ENCODE measurements at regions of chr9 and their contacts with region 1.

Region 1: DNA sequence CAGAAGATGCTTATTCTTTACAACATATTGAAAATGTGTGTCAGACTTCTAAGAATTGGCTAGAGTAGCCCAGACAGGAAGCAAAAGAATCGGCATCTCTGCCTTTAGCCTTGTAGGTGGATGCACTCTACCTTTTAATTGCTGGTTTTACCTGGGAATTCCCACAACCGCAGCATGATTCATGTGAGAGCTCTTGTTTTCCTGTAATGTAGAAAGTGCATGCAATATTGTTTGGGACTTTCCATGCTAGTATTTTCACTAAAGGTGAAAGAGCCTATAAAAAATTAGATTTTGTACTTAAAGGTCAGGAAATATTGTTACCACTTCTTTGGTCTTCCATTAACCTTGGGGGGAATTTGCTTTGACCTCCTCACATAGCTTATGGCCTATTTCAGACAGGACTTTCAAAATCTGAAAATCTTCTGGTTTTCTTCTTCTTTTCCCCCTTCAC is 89.8 kb downstream of the NTRK2 start:
- DNase-seq: peak; percentile 49
- H3K4me3 Mint-ChIP-seq: peak overlapping the region; percentile 59
- H3K27ac Mint-ChIP-seq: peak overlapping the region; percentile 83
- H3K4me1 Mint-ChIP-seq: peaks cover 55% of the 10 kb centered on the region
- H3K27me3 Mint-ChIP-seq: no peaks in the 10 kb centered on the region

Region 2: DNA sequence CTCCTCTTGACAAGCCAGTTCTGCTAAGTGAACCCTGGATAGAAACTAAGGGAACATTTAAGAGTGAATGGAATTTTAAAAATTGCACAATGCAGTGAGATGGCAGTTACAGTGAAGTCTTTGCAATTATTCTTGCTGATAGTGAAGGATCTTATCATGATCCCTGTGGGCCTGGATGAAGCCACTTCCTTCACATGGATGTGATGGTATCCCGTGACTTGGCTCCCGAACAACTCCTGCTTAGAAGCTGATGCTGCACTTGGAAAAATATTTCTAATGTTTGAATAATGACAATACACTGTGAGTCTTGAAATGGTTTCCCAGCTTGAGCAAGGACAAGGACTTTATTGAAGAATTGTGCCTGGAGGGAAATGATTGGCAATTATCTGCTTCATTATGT is 139.0 kb before region 1 on chr9:
- intact Hi-C with region 1: no loop called
- DNase-seq: no peak
- H3K4me3 Mint-ChIP-seq: no peak overlapping the region
- H3K27ac Mint-ChIP-seq: no peak overlapping the region
- H3K4me1 Mint-ChIP-seq: no peaks in the 10 kb centered on the region
- H3K27me3 Mint-ChIP-seq: no peaks in the 10 kb centered on the region

Region 3: DNA sequence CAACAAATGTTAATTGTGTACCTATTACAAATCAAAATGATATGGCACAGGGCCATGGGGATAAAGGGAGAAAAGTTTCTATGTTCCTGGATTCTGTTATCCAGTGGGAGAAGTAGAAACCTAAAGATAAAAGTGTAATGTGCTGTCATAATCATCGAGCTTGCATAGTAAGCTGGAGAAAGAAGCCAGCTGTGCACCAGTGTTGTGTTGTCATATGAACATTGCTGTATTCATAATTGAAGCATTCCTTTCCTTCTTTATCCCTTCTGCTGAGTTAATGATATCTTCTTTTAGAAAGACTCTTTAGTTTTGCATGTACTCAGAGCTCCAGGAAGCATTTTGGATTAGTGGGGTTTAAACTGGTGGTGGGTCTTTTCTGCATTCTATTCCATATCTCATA is 50.3 kb before region 1 on chr9:
- intact Hi-C with region 1: loop called (anchors 2 kb)
- DNase-seq: no peak
- H3K4me3 Mint-ChIP-seq: no peak overlapping the region
- H3K27ac Mint-ChIP-seq: peak overlapping the region; percentile 21
- H3K4me1 Mint-ChIP-seq: peaks cover 31% of the 10 kb centered on the region
- H3K27me3 Mint-ChIP-seq: peaks cover 7% of the 10 kb centered on the region

Region 4: GRCh38 chr9:84736081-84736480 is 23.2 kb before region 1 on chr9:
- intact Hi-C with region 1: no loop called
- DNase-seq: no peak
- H3K4me3 Mint-ChIP-seq: no peak overlapping the region
- H3K27ac Mint-ChIP-seq: no peak overlapping the region
- H3K4me1 Mint-ChIP-seq: no peaks in the 10 kb centered on the region
- H3K27me3 Mint-ChIP-seq: peaks cover 14% of the 10 kb centered on the region